Esophagus squamous epithelium (tissue), 5 donors: ENCODE measurements at regions of chr2 and their contacts with region 1.

Region 1: DNA sequence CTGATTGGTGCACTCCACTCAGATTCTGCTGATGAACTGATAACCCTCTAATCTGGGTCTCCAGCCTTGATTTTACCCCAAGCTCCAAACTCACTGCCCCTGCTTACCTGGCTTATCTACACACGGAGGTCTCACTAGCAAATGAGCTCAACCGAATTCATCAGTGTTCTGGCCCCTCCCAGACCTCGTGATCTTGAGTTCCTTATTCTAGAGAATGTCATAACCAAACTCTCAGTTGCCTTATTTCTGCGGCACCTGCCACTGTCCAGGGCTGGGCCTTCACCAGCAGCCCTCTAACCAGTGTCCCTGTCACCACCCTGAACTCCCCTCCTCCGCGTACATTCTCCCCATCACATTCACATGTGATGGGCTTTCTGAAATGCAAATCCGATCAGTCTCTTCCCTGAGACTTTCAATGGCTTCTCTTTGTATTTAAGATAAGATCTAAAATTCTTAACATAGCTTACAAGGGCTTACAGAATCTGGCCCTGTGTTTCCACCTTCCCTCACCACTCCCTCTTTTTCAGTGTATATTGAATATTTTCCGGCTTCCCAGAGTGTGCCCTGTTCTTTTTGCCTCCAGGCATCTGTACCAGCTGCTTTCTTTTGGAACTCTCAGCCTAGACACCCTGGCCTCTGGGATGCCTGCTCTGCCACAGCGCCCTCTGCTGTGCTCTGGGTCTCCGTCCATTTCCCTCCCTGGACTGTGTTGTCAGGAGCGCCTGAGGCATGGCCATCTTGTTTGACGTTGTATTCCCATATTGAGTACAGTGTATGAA is 31.1 kb downstream of the NAB1 start:
- DNase-seq: no peak
- H3K4me3 ChIP-seq: peak overlapping the region in 1 of 4 donors; percentile 3
- H3K27ac ChIP-seq: no peak overlapping the region
- H3K4me1 ChIP-seq: peaks cover 4 to 15% (median 7%) of the 10 kb centered on the region in 3 donors
- H3K27me3 ChIP-seq: no peaks in the 10 kb centered on the region
- CTCF ChIP-seq: peak; percentile 46 to 74 (median 60)
- POLR2A ChIP-seq: peak in 1 of 4 donors; percentile 31

Region 2: GRCh38 chr2:190277234-190278112 is 402.5 kb before region 1 on chr2:
- intact Hi-C with region 1: no loop called
- DNase-seq: no peak
- H3K4me3 ChIP-seq: no peak overlapping the region
- H3K27ac ChIP-seq: no peak overlapping the region
- H3K4me1 ChIP-seq: peaks cover 0 to 26% (median 6%) of the 10 kb centered on the region in 3 donors
- H3K27me3 ChIP-seq: no peaks in the 10 kb centered on the region
- CTCF ChIP-seq: peak in 5 of 6 experiments; percentile 22 to 49 (median 22)
- POLR2A ChIP-seq: no peak

Region 3: GRCh38 chr2:190379249-190379964 is 300.6 kb before region 1 on chr2:
- intact Hi-C with region 1: loop called (anchors 10 kb)
- DNase-seq: no peak
- H3K4me3 ChIP-seq: no peak overlapping the region
- H3K27ac ChIP-seq: no peak overlapping the region
- H3K4me1 ChIP-seq: peaks cover 0 to 4% (median 0%) of the 10 kb centered on the region in 3 donors
- H3K27me3 ChIP-seq: no peaks in the 10 kb centered on the region
- CTCF ChIP-seq: no peak
- POLR2A ChIP-seq: no peak